ENCODE measurements at regions of chr5 and their contacts with region 1.

Region 1: GRCh38 chr5:58460732-58461286 is 923 bp upstream of the PLK2 start:
- DNase-seq: peak; percentile 95
- H3K4me3 Mint-ChIP-seq: peak overlapping the region; percentile 78
- H3K27ac Mint-ChIP-seq: peak overlapping the region; percentile 81
- H3K4me1 Mint-ChIP-seq: peaks cover 15% of the 10 kb centered on the region
- H3K27me3 Mint-ChIP-seq: peaks cover 13% of the 10 kb centered on the region

Region 2: GRCh38 chr5:56951946-56952691 is 1508.7 kb before region 1 on chr5 and contains the start of gene MIER3:
- CTCF ChIA-PET with region 1: no interaction called
- intact Hi-C with region 1: loop called (anchors 2 kb)
- DNase-seq: peak; percentile 83
- H3K4me3 Mint-ChIP-seq: peak within 1 kb of the TSS; percentile 85
- H3K27ac Mint-ChIP-seq: peak within 1 kb of the TSS; percentile 9
- H3K4me1 Mint-ChIP-seq: peaks cover 20% of the 10 kb centered on the region
- H3K27me3 Mint-ChIP-seq: peaks cover 10% of the 10 kb centered on the region
- total RNA-seq, gene MIER3: 11.1 to 12.3 TPM

Region 3: DNA sequence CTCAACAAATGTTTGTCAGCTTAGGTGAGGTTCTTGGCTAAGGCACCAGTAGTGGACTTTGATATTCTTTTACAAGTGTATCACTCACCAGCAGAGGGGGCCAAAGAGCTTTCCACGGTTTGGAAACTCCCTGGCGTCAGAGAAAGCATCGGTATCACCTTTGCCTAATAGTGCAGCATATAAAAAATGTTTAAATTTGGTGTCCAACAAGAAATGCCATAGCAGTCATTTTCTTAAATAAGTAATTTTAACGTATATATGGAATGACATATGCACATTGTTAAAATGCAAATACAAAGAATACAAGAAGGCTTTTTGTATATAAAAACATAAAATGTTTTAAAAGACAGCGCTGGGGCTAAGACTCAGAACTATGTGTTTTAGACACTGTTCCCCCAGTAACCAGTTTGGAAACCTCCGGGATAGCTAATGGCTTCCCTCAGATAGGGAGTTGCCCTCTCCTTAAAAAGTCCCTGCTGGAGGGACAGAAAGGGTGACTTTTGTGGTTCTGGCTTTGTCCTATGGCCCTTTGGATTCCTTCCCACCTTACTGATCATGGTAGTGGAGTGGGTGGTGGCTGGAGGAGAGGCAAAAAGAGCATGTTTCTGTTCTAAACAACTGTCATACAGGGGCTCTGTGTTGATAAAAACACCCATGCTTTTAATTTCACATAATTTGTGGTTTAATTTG is 1162.4 kb before region 1 on chr5:
- CTCF ChIA-PET with region 1: interaction called, 57 read pairs
- intact Hi-C with region 1: loop called (anchors 1 kb)
- DNase-seq: peak; percentile 94
- H3K4me3 Mint-ChIP-seq: peak overlapping the region; percentile 41
- H3K27ac Mint-ChIP-seq: no peak overlapping the region
- H3K4me1 Mint-ChIP-seq: peaks cover 32% of the 10 kb centered on the region
- H3K27me3 Mint-ChIP-seq: no peaks in the 10 kb centered on the region

Region 4: GRCh38 chr5:57338068-57338892 is 1122.5 kb before region 1 on chr5:
- CTCF ChIA-PET with region 1: interaction called, 3 read pairs
- intact Hi-C with region 1: loop called (anchors 1 kb)
- DNase-seq: peak; percentile 31
- H3K4me3 Mint-ChIP-seq: no peak overlapping the region
- H3K27ac Mint-ChIP-seq: no peak overlapping the region
- H3K4me1 Mint-ChIP-seq: no peaks in the 10 kb centered on the region
- H3K27me3 Mint-ChIP-seq: peaks cover under 1% of the 10 kb centered on the region

Region 5: GRCh38 chr5:57450991-57451876 is 1009.6 kb before region 1 on chr5:
- CTCF ChIA-PET with region 1: no interaction called
- intact Hi-C with region 1: no loop called
- DNase-seq: peak; percentile 20
- H3K4me3 Mint-ChIP-seq: no peak overlapping the region
- H3K27ac Mint-ChIP-seq: no peak overlapping the region
- H3K4me1 Mint-ChIP-seq: peaks cover 8% of the 10 kb centered on the region
- H3K27me3 Mint-ChIP-seq: peaks cover 4% of the 10 kb centered on the region

Region 6: DNA sequence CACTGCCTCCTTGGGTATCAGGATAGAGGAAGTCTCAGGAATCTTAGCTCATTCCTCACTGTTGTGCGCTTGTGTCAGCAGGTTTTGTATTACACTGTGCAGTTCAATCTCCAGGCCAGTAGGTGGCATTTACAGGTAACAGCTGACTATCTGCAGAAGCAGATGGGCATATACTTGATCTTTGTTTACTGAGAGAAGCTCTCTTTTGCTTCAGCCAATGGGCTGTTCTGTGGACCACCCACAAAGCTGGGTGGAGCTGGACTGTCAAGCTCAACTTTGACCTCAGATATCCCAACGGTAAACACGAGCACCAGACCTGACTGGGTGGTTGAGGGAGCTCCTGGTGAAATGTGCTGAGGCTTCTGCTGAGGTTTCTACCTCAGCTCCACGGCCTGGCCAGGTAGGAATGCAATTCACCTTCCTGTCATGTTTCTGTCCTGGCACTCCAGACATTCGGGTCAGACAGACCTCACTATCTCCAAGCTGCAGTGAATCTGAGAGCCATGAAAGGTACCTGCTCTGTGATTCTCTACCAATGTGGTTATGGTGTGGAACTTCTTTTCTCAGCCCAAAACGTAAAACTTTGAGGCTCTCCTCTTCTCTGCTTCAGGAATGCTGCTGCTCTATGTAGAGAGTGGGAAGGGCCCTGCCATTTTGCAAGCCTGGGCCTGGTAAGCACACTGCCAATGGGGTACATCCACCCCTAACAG is 810.3 kb before region 1 on chr5:
- CTCF ChIA-PET with region 1: interaction called, 22 read pairs
- intact Hi-C with region 1: loop called (anchors 1 kb)
- DNase-seq: peak; percentile 19
- H3K4me3 Mint-ChIP-seq: no peak overlapping the region
- H3K27ac Mint-ChIP-seq: no peak overlapping the region
- H3K4me1 Mint-ChIP-seq: no peaks in the 10 kb centered on the region
- H3K27me3 Mint-ChIP-seq: peaks cover 9% of the 10 kb centered on the region

Region 7: GRCh38 chr5:58201922-58202648 is 258.7 kb before region 1 on chr5:
- CTCF ChIA-PET with region 1: no interaction called
- intact Hi-C with region 1: loop called (anchors 10 kb)
- DNase-seq: no peak
- H3K4me3 Mint-ChIP-seq: no peak overlapping the region
- H3K27ac Mint-ChIP-seq: no peak overlapping the region
- H3K4me1 Mint-ChIP-seq: no peaks in the 10 kb centered on the region
- H3K27me3 Mint-ChIP-seq: no peaks in the 10 kb centered on the region

Region 8: DNA sequence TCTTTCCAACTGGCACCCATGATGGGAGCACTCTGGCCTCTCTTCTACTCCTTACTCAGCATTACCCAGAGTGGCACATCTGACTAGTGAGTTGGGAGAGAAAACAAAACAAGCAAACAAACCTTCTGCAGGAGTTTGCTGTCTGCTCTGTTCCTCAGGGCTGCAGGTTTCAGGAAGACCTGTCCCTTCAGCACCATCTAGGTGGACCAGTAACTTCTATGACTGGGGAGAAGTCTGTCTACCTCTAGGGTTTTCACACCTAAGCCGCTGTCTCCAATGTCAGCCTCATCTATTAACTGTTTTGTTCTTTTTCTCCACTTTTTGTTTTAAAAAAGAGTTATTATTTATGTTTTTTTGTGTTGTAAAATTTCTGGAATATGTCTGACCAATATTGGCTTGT is 180.7 kb after region 1 on chr5:
- CTCF ChIA-PET with region 1: no interaction called
- intact Hi-C with region 1: no loop called
- DNase-seq: no peak
- H3K4me3 Mint-ChIP-seq: no peak overlapping the region
- H3K27ac Mint-ChIP-seq: no peak overlapping the region
- H3K4me1 Mint-ChIP-seq: no peaks in the 10 kb centered on the region
- H3K27me3 Mint-ChIP-seq: peaks cover 6% of the 10 kb centered on the region

Measured in activated naive CD4-positive, alpha-beta T cell treated with anti-CD3 and anti-CD28 coated beads for 36 hours (primary cell).